ENCODE measurements at regions of chr6 and their contacts with region 1.

Region 1: GRCh38 chr6:66336176-66336575 is 629.1 kb upstream of the EYS start:
- DNase-seq: no peak
- H3K4me3 ChIP-seq: no peak overlapping the region
- CTCF ChIP-seq: no peak

Region 2: DNA sequence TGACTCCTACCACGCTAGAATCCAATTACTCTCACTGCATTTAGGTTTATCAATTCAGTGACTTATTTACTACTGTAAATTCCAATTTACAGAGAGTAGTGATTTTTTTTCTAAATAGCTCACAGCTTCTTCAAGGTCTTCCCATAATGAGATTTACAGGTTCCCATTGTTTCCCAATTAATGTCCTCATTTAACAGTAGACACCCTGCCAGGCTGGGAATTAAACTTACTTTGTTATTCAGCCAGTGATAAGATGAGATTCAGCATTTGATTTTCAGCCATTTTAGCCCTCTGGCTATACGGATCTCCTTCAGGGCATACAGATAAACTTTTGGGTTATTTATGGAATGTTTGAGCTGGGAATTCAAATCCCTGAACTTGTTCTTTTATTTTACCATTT is 46.3 kb before region 1 on chr6:
- in situ Hi-C with region 1: loop called (anchors 5 kb)
- DNase-seq: no peak
- H3K4me3 ChIP-seq: no peak overlapping the region
- CTCF ChIP-seq: no peak

Region 3: DNA sequence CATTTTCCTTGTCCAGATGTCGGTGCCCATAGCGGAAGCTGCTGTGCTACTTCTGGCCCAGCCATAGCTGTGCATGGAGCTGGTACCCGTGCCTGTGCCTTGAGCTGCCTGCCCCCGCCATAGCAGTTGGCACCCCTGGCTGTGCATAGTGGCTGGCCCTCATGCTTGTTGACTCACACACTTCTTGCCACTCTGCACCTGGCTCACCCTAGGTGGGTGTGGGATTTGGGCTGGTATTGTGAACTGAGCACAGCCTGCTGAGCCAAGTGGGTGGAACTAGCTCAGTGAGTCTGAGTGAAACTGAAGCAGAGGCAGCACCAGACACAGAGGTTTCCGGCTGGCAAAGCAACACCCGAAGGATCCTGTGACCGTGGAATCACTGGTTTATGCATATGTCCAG is 60.4 kb after region 1 on chr6:
- in situ Hi-C with region 1: no loop called
- DNase-seq: no peak
- H3K4me3 ChIP-seq: no peak overlapping the region
- CTCF ChIP-seq: no peak

Region 4: GRCh38 chr6:66538551-66539135 is 202.5 kb after region 1 on chr6:
- in situ Hi-C with region 1: no loop called
- DNase-seq: no peak
- H3K4me3 ChIP-seq: no peak overlapping the region
- CTCF ChIP-seq: no peak

Measured in astrocyte of the cerebellum (primary cell).